PC-9 (cell line): ENCODE measurements at regions of chr1 and their contacts with region 1.

Region 1: DNA sequence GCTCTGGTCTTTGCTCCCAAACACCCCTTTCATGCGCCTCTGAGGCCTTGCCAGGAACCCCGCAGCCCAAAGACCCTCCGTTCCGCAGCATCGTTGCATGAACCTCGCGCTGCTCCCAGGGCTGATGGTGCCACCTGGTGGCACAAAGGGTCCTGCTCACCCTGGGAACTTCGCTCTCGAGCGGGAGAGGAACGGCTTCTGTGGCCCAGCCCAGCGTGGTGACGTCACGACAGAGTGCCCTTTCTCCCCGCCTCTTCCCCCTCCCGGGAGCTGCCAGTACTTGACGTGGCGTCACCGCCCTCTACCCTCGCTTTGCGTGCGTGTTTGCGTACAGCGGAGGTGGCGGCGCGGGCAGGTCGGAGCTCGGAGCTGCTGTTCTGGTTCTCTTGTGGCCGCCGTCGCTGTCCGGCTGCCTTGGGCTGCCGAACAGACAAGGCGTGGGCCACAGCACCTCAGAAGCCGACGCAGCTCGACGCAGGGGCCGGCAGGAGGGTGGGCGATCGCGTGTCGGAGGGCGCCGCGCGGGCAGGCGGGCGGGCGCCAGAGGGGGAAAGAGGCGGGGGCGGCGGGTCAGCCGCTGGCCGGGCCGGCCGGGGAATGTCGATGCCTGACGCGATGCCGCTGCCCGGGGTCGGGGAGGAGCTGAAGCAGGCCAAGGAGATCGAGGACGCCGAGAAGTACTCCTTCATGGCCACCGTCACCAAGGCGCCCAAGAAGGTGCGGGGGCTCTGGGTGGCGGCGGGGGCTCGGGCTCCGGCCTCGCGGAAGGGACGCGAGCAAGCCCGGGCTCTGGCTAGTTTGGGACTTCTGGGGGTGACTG is at the start of gene AHCYL1:
- DNase-seq: peak; percentile 98
- H3K4me3 ChIP-seq: peak within 1 kb of the TSS; percentile 87
- H3K27ac ChIP-seq: peak within 1 kb of the TSS; percentile 59
- H3K4me1 ChIP-seq: peaks cover 86% of the 10 kb centered on the region
- H3K27me3 ChIP-seq: no peaks in the 10 kb centered on the region
- CTCF ChIP-seq: peak; percentile 99
- total RNA-seq, gene AHCYL1: 143 and 147 TPM in 2 replicates

Region 2: DNA sequence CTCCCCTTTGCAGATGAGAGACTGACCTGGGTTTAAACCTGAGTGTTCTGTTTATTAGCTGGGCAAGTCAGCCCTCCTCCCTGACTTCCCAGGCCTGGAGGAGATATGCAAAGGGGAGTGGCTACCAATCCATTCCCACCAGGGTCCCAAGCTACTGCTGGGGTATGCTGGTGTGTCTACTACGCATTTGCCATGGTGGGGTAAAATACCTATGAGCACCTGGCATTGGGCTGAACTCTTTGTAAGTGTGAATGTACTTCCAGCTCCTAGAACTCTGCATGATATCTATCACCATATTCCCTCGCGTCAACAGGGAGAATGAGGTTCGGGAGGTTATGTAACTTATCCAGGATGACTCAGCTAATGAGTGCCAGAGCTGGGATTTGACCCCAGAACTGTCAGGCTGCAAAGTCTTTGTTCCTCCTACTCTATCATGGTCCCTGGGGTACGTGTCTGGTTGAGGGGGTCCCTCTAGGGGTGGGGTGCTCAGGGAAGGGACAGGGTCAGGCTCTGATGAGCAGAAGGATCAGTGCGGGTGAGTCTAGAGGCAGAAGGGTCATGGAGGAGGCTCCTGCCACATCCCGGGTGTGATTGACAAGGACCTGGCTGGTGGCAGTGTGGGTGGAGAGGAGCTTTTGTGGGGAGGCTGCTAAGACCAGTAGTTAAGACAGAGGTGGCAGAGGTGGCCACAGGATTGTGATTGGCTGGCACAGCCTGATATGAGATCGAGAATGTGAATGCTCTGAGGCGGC is 348.3 kb before region 1 on chr1:
- CTCF ChIA-PET with region 1: interaction called, 22 read pairs
- POLR2A ChIA-PET with region 1: interaction called, 4 read pairs
- intact Hi-C with region 1: loop called (anchors 1 kb)
- DNase-seq: peak; percentile 63 to 70
- H3K4me3 ChIP-seq: no peak overlapping the region
- H3K27ac ChIP-seq: peak overlapping the region; percentile 52
- H3K4me1 ChIP-seq: peaks cover 18% of the 10 kb centered on the region
- H3K27me3 ChIP-seq: no peaks in the 10 kb centered on the region
- CTCF ChIP-seq: no peak

Region 3: DNA sequence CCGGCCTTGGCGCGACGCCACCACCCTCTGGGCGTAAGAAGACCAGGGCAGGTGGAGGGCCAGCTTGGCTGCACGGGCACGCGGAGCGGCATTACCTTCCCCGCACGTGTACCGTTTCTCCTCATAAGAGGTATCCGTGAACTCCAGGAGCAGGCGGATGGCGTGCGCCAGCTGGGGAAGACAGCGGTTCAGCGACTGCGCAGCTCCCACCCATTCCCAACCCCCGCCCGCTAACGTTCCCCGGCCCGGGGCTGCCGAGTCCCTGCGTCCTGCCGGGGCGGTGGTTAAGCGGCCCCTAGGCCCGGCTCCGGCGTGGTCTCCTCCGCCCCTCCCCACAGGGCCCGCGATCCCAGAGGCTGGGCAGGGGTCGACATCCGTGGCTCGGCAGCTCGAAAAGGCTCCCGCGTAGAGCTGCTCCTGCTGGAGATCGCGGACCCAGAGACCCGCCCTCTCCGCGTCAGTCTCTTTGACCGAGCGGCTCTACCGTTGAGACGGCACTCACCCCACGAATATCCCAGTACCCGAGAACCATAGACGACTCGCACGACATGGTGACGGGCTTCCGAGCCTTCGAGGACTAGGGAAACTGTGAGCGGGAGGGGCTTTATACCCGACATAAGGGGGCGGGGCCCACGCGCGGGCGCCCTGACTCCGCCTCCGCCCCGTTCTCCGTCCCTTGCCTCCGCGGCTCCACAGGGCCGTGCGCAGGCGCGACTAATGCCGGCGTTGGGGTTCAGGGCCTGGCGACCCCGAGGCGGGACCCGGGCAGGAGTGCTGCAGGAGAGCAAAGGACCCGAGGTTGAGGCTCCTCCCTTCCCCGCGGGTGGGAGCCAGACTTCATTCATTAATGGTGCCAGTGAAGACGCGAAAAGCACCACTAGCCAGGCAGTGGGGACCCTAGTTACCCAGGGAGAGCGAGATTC is 244.7 kb before region 1 on chr1:
- CTCF ChIA-PET with region 1: no interaction called
- POLR2A ChIA-PET with region 1: interaction called, 10 read pairs
- intact Hi-C with region 1: no loop called
- DNase-seq: peak; percentile 66 to 80
- H3K4me3 ChIP-seq: peak overlapping the region; percentile 59
- H3K27ac ChIP-seq: no peak overlapping the region
- H3K4me1 ChIP-seq: peaks cover 15% of the 10 kb centered on the region
- H3K27me3 ChIP-seq: no peaks in the 10 kb centered on the region
- CTCF ChIP-seq: no peak

Region 4: GRCh38 chr1:109790735-109791494 is 193.8 kb before region 1 on chr1:
- CTCF ChIA-PET with region 1: interaction called, 21 read pairs
- POLR2A ChIA-PET with region 1: interaction called, 8 read pairs
- intact Hi-C with region 1: loop called (anchors 1 kb)
- DNase-seq: peak; percentile 82 to 88
- H3K4me3 ChIP-seq: peak overlapping the region; percentile 36; the same call in 1 of the 2 replicates
- H3K27ac ChIP-seq: peak overlapping the region; percentile 95
- H3K4me1 ChIP-seq: peaks cover 94% of the 10 kb centered on the region
- H3K27me3 ChIP-seq: no peaks in the 10 kb centered on the region
- CTCF ChIP-seq: peak; percentile 61

Region 5: DNA sequence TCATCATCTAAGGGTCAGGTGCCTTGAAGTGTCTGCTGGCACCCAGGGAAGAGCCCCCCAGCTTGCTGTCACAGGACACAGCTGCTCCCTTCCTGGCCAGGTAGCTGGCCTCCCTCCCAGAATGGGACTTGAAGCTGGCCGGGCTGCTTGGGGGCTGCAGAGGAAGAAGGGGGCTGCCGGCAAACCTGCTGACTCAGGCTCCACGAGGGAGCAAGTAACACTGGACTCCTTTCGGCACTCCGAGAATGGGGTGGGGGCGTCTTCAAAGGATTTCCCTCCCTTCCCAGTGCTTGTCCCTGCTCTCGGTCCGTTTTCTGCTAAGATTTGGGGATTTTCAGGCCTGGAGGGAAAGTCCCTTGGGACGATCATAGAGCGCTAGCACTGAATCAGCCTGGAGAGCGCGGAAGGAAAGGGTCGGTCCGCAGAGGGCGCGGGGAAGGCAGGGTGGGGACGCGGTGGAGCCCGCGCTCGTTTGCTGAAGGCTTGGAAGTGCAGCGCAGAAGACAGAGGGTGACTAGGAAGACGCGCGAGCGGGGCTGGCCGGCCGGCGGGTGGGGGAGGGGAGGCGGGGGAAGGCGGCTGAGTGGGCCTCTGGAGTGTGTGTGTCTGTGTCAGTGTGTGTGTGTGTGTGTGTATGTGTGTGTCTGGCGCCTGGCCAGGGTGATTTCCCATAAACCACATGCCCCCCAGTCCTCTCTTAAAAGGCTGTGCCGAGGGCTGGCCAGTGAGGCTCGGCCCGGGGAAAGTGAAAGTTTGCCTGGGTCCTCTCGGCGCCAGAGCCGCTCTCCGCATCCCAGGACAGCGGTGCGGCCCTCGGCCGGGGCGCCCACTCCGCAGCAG is 74.3 kb before region 1 on chr1 and contains the start of gene CSF1:
- CTCF ChIA-PET with region 1: no interaction called
- POLR2A ChIA-PET with region 1: no interaction called
- intact Hi-C with region 1: loop called (anchors 1 kb)
- DNase-seq: peak; percentile 53 to 58
- H3K4me3 ChIP-seq: peak within 1 kb of the TSS; percentile 98
- H3K27ac ChIP-seq: 0 out of 2 replicates have a peak within 1 kb of the TSS, but pooled peaks have one; percentile 9
- H3K4me1 ChIP-seq: peaks cover 44% of the 10 kb centered on the region
- H3K27me3 ChIP-seq: no peaks in the 10 kb centered on the region
- CTCF ChIP-seq: no peak
- total RNA-seq, gene CSF1: 29.8 and 35.2 TPM in 2 replicates

Region 6: DNA sequence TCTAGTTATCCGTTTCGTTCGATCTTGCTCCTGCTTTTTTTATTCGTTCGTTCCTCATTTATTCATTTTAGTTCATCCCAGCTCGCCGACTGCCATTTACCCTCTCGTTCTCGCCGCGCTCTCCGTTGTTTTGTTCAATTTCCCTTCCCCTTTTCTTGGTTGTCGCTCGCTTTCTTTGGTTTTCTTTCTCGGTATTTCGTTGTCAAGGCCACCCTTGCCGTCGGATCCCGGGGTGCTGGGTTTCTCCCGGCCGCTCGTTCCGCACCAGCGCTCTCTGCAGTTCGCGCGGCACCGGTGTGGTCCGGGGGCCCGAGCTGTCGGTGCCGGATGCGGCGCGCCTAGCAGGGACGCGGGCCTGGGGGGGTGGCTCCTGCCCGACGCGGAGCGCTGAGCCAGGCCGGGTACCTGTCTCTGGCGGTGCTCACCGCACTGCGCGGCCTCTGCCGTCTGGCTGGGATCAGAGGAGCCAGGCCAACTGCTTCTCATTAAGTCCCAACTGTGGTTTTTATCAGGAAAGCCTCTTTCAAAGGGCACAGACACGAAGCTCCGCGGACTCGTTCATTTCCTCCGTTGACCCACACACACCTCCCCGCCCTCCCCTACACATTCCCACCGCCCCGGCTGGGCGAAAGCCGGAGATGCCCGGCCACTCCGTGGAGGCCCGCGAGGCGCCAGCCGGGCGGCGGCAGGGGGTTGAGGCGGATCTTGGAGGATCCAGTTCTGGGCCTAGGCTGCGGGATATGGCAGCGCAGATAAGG is 84.2 kb after region 1 on chr1:
- CTCF ChIA-PET with region 1: no interaction called
- POLR2A ChIA-PET with region 1: no interaction called
- intact Hi-C with region 1: no loop called
- DNase-seq: no peak
- H3K4me3 ChIP-seq: no peak overlapping the region
- H3K27ac ChIP-seq: no peak overlapping the region
- H3K4me1 ChIP-seq: no peaks in the 10 kb centered on the region
- H3K27me3 ChIP-seq: no peaks in the 10 kb centered on the region
- CTCF ChIP-seq: no peak

Region 7: GRCh38 chr1:110262846-110263631 is 278.4 kb after region 1 on chr1:
- CTCF ChIA-PET with region 1: no interaction called
- POLR2A ChIA-PET with region 1: no interaction called
- intact Hi-C with region 1: no loop called
- DNase-seq: no peak
- H3K4me3 ChIP-seq: no peak overlapping the region
- H3K27ac ChIP-seq: no peak overlapping the region
- H3K4me1 ChIP-seq: peaks cover 8% of the 10 kb centered on the region; the same call in 1 of the 2 replicates
- H3K27me3 ChIP-seq: no peaks in the 10 kb centered on the region
- CTCF ChIP-seq: no peak

Region 8: DNA sequence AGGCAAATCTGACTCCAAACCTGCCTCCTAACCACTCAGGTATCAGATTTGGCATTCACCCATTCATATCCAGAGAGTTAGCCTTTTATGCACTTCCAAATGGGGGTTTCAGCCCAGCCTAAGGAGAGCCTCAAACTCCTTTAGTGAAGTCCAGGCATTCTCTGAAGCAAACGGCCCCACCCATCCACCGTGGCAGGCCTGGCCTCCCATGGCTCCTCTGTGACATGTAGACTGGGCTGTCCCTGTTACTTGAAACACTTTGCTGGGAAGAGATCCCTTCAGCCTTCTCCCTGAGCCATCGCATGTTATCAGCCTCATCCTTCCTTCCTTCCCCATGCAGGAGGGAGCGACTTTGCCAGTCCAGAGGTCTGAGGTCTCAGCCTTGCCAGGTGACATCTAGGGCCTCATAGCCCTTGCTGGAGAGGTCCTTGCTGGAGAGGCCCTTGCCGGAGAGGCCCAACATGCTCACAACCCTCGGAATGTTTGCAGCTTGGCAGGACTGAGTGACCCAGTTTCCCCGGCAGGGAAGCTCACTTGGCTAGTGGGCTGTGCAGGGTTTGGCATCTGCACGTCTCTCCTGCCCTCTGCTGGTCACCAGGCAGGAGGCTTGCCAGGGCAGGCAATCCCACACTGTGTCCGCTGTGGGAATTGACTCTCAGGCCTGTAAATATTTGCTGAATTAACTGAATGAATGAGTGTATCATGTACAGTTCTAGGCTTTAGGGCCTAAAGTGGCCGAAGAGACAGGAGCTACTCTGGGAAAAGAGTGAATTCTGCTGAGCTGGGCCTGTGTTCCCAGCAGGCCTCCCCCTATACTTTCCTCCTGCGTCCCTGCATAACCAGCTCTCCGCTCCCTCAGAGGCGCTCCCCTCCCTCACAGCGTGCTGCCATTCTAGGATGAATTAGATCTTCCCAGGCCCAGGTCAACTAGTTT is 327.8 kb after region 1 on chr1:
- CTCF ChIA-PET with region 1: no interaction called
- POLR2A ChIA-PET with region 1: no interaction called
- intact Hi-C with region 1: no loop called
- DNase-seq: peak; percentile 72 to 74
- H3K4me3 ChIP-seq: no peak overlapping the region
- H3K27ac ChIP-seq: no peak overlapping the region
- H3K4me1 ChIP-seq: no peaks in the 10 kb centered on the region
- H3K27me3 ChIP-seq: no peaks in the 10 kb centered on the region
- CTCF ChIP-seq: peak; percentile 99

Region 9: GRCh38 chr1:111920221-111921024 is 1935.8 kb after region 1 on chr1:
- CTCF ChIA-PET with region 1: no interaction called
- POLR2A ChIA-PET with region 1: no interaction called
- intact Hi-C with region 1: no loop called
- DNase-seq: no peak
- H3K4me3 ChIP-seq: no peak overlapping the region
- H3K27ac ChIP-seq: no peak overlapping the region
- H3K4me1 ChIP-seq: no peaks in the 10 kb centered on the region
- H3K27me3 ChIP-seq: peaks cover 61% of the 10 kb centered on the region
- CTCF ChIP-seq: no peak